Activated CD8-positive, alpha-beta T cell treated with anti-CD3 and anti-CD28 coated beads, Interleukin-2, amount 10 ng/mL, durations not matched to agents 7 days and 5 days (primary cell): ENCODE measurements at regions of chr21 and their contacts with region 1.

Region 1: DNA sequence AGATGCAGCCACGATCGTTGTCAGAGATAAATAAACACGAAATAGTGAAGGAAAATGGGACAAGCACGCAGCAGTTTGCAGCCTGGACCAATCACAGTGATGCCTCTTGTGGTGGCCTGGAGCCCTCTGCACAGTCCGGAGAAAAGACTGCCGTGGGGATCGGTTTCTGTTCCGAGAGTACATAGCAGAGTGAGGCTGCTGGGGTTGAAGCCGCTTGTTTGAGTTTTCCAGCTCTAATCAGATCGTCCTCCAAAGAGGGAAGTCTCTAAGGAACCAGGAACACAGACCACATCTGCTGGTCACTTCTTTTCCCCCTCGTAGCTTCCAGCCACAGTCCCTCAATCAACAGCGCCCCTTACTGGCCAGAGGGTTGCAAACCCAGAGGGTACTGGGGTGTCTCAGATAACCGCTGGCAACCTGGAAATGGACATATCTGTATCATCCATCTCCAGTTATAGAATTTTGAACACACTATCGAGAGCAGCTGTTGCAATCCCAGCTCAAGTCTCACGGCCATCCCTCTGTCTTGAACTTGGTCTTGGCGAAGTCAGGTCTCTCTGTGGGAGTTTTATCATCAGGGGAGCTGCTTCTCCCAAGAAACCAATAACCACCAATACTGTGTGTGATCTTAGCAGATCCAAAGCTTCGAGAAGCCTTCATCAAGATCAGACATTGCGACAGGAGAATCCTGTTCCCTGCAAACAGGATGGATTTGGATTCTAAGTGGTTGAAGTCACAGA is 57.4 kb downstream of the OLIG1 start:
- DNase-seq: peak; percentile 70
- ATAC-seq: peak; percentile 80
- H3K4me3 Mint-ChIP-seq: peak overlapping the region; percentile 52
- H3K27ac Mint-ChIP-seq: no peak overlapping the region
- H3K4me1 Mint-ChIP-seq: peaks cover 4% of the 10 kb centered on the region
- H3K27me3 Mint-ChIP-seq: peaks cover 32% of the 10 kb centered on the region

Region 2: GRCh38 chr21:32977216-32977615 is 150.1 kb before region 1 on chr21:
- CTCF ChIA-PET with region 1: no interaction called
- POLR2A ChIA-PET with region 1: no interaction called
- DNase-seq: no peak
- ATAC-seq: no peak
- H3K4me3 Mint-ChIP-seq: no peak overlapping the region
- H3K27ac Mint-ChIP-seq: no peak overlapping the region
- H3K4me1 Mint-ChIP-seq: no peaks in the 10 kb centered on the region
- H3K27me3 Mint-ChIP-seq: peaks cover 27% of the 10 kb centered on the region

Region 3: DNA sequence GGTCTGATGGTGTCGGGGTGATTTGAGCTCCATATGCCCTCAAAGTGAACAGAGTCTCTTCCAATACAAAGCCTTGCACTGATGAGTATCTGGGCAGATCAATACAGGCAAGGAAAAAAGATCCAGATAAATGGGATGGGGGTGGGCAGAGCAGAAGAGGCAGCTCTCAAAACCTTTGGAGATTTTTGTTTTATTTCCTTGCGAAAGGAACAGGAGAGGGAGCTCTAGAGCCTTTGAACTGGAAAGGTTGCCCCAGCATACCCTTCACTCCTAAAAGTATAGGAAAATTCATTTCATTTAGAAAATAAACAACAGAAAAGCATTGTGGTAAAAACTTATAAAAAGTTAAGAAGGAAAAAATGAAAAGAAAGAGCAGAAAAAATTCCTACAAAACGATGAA is 133.0 kb before region 1 on chr21:
- CTCF ChIA-PET with region 1: interaction called, 19 read pairs
- POLR2A ChIA-PET with region 1: no interaction called
- DNase-seq: no peak
- ATAC-seq: no peak
- H3K4me3 Mint-ChIP-seq: no peak overlapping the region
- H3K27ac Mint-ChIP-seq: no peak overlapping the region
- H3K4me1 Mint-ChIP-seq: no peaks in the 10 kb centered on the region
- H3K27me3 Mint-ChIP-seq: peaks cover 45% of the 10 kb centered on the region